Activated CD4-positive, alpha-beta T cell treated with anti-CD3 and anti-CD28 coated beads for 36 hours (primary cell): ENCODE measurements at regions of chr5 and their contacts with region 1.

Region 1: DNA sequence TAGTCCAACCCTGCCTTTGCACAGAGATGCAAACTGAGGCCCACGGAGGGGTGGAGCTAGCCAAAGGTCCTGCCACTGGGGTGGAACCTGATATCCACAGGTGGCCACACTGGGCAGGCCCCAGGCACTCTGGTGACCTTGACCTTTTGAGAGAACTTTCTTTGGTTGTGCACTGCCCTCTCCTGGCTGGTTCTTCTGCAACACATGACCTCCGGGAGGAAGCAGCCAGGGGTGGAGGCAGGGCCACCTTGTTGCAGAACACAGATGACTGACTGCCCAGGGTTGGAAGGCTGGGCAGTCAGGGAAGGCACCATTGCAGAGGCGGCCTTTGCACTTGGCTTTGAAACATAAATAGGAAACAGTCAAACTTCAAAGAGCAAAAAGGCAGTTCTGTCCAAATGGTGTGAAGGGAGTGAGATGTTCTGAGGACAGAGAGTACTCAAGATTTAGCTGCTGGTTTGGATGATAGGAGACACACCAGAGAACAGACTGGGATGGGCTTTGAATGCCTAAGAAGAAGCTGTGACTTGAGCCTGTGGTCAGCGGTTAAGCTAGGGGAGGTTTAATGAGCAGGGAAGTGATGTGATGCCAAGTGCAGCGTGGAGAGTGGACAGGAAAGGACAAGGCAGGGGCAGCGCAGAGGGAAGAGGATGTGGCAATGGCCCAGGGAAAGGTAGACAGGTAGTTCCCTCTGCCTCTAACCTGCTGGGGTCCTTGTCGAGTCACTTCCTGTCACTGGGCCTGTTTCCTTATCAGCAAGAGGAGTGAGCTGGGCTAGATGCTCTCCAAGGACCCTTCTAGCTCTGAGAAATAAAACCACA is 6.8 kb upstream of the TCOF1 start:
- DNase-seq: peak; percentile 78
- ATAC-seq: peak; percentile 93
- H3K4me3 Mint-ChIP-seq: no peak overlapping the region
- H3K27ac Mint-ChIP-seq: peak overlapping the region; percentile 22
- H3K4me1 Mint-ChIP-seq: peaks cover 8% of the 10 kb centered on the region
- H3K27me3 Mint-ChIP-seq: no peaks in the 10 kb centered on the region

Region 2: GRCh38 chr5:150129813-150130492 is 220.8 kb before region 1 on chr5:
- CTCF ChIA-PET with region 1: no interaction called
- POLR2A ChIA-PET with region 1: no interaction called
- intact Hi-C with region 1: loop called in 1 of 2 experiments (anchors 1 kb)
- DNase-seq: peak; percentile 71
- ATAC-seq: peak; percentile 92
- H3K4me3 Mint-ChIP-seq: no peak overlapping the region
- H3K27ac Mint-ChIP-seq: no peak overlapping the region
- H3K4me1 Mint-ChIP-seq: no peaks in the 10 kb centered on the region
- H3K27me3 Mint-ChIP-seq: no peaks in the 10 kb centered on the region

Region 3: DNA sequence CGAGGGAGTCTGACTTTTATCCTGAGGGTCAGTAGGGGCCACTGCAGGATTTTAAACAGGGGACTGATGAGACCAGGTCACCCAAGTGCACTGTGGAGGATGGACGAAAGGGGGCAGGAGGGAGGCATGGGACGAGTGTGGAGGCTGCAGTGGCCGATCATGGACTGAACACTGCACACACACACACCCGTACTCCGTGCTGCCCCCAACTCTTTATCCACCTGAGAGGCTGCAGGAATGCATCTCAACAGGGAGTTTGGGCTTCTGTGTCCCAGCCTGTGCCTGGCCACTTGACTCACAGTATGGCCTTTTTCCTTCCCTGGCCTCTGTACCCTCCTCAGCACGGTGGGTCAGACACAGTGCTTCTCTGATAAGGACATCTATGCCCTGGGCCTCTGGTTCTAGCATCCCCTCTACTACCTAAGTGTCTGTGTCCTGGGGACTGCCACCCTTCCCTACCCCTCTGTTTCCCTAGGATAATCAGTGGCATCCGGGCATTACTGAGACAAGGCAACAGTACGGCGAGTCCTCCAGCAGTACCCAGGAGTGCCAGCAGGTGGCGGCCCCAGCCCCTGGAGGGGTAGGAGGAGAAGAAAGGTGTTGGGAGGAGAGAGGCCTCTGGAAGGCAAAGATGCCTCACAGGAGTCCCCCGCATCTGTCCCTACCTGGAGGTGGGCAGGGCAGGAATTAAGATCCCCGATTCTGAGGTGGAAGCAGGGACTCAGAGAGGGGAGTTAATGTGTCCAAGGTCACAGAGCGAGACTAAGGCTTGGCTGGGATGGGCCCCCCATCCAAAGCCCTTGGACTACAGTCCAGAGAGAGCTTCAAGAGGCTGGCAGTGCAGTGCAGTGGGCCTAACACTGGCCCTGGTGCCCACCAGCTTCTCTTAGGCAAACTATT is 189.2 kb before region 1 on chr5:
- CTCF ChIA-PET with region 1: no interaction called
- POLR2A ChIA-PET with region 1: no interaction called
- intact Hi-C with region 1: loop called (anchors 1 to 5 kb)
- DNase-seq: peak; percentile 88
- ATAC-seq: peak; percentile 91
- H3K4me3 Mint-ChIP-seq: no peak overlapping the region
- H3K27ac Mint-ChIP-seq: no peak overlapping the region
- H3K4me1 Mint-ChIP-seq: no peaks in the 10 kb centered on the region
- H3K27me3 Mint-ChIP-seq: peaks cover 8% of the 10 kb centered on the region

Region 4: GRCh38 chr5:150272526-150272925 is 78.2 kb before region 1 on chr5:
- CTCF ChIA-PET with region 1: interaction called, 3 read pairs
- POLR2A ChIA-PET with region 1: no interaction called
- intact Hi-C with region 1: loop called in 1 of 2 experiments (anchors 2 kb)
- DNase-seq: peak; percentile 15
- ATAC-seq: no peak
- H3K4me3 Mint-ChIP-seq: no peak overlapping the region
- H3K27ac Mint-ChIP-seq: no peak overlapping the region
- H3K4me1 Mint-ChIP-seq: no peaks in the 10 kb centered on the region
- H3K27me3 Mint-ChIP-seq: peaks cover 3% of the 10 kb centered on the region